ENCODE measurements at regions of chr5 and their contacts with region 1.

Region 1: GRCh38 chr5:108046955-108047670 is 334.8 kb downstream of the FBXL17 start:
- DNase-seq: no peak
- H3K4me3 ChIP-seq: no peak overlapping the region
- H3K27ac ChIP-seq: no peak overlapping the region
- H3K4me1 ChIP-seq: no peaks in the 10 kb centered on the region
- H3K27me3 ChIP-seq: no peaks in the 10 kb centered on the region
- CTCF ChIP-seq: no peak

Region 2: DNA sequence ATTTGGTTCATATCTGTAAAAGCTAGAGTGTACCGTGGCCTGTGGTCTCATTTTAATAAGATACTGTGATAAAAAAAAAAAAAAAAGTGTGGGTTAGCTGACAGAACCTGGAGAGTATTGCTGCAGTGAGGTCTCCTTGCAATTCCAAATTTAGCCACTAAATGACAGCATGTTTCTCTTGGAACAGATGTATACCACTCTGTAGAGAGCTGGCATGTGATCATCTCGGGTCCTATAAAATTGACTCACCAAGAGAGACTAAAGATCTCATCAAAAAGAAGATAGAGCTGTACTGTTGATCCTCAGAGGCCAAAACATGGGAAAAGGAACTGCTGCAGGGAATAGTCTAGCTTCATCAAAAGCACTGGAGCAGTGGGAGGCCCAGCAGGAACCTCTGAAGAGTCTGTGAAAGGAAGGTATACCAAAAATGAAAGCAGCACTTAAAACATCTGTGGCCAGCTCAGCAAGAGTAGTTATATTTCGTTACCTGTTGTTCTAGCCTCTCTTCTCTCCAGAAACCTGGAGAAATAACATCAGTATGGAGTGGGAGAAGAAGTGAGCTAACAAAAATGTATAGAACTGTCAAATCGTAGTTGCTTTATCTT is 1203.2 kb before region 1 on chr5:
- CTCF ChIA-PET with region 1: no interaction called
- dilution Hi-C with region 1: no loop called
- in situ Hi-C with region 1: no loop called
- intact Hi-C with region 1: no loop called
- DNase-seq: peak; percentile 26
- H3K4me3 ChIP-seq: no peak overlapping the region
- H3K27ac ChIP-seq: no peak overlapping the region
- H3K4me1 ChIP-seq: no peaks in the 10 kb centered on the region
- H3K27me3 ChIP-seq: no peaks in the 10 kb centered on the region
- CTCF ChIP-seq: peak; percentile 35 to 43

Region 3: DNA sequence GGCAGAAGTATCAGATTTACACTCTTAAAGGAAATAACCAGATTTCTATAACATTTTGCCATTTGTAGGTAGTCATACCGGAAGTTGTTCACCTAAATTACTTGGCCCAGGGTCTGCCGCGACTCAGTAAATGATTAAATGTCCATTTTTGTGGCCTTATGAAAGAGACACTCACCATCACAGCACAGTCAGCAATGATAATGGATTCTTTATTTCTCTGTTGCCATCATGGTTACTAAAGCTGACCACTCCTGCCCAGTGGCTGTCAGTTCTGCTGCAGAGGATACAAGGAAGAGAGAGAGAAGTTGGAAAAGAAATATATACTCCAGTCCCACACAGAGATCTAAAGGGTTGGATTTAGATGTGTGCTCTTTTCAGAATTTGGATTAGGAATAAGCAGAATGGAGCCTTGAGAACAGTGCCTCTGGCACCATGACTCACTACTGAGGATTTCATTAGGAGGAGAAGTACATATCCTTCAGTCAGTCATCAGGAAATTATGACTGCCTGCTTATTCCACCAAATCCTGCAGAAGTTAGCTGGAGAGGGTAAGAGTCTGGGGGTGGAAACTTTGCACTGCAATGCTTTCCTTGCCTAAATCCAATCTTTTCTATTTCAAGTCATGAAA is 303.6 kb before region 1 on chr5:
- CTCF ChIA-PET with region 1: interaction called, 17 read pairs
- dilution Hi-C with region 1: no loop called
- in situ Hi-C with region 1: no loop called
- intact Hi-C with region 1: no loop called
- DNase-seq: peak; percentile 71
- H3K4me3 ChIP-seq: no peak overlapping the region
- H3K27ac ChIP-seq: no peak overlapping the region
- H3K4me1 ChIP-seq: peaks cover 5% of the 10 kb centered on the region
- H3K27me3 ChIP-seq: no peaks in the 10 kb centered on the region
- CTCF ChIP-seq: no peak

Region 4: DNA sequence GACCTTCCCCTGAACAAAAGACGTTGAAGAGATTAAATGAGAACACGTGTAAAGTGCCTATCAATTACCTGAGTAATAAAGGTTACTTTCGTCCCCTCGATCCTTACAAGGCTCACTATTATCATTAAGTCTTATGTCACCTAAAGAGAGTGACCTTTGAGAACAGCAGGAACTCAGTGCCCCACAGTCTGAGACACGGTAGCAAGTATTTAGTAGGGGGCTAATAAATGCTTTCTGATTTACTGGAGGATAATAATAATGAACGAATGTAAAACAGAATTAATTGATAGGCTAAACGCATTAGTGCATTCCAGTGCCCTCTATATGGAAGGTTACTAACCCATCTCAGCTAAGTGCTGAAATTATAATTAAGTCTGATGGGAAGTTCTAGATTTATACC is 134.9 kb after region 1 on chr5:
- CTCF ChIA-PET with region 1: no interaction called
- dilution Hi-C with region 1: no loop called
- in situ Hi-C with region 1: no loop called
- intact Hi-C with region 1: no loop called
- DNase-seq: no peak
- H3K4me3 ChIP-seq: no peak overlapping the region
- H3K27ac ChIP-seq: no peak overlapping the region
- H3K4me1 ChIP-seq: no peaks in the 10 kb centered on the region
- H3K27me3 ChIP-seq: no peaks in the 10 kb centered on the region
- CTCF ChIP-seq: no peak

Region 5: GRCh38 chr5:108461628-108462367 is 414.7 kb after region 1 on chr5:
- CTCF ChIA-PET with region 1: no interaction called
- dilution Hi-C with region 1: no loop called
- in situ Hi-C with region 1: no loop called
- intact Hi-C with region 1: no loop called
- DNase-seq: peak; percentile 59
- H3K4me3 ChIP-seq: no peak overlapping the region
- H3K27ac ChIP-seq: no peak overlapping the region
- H3K4me1 ChIP-seq: no peaks in the 10 kb centered on the region
- H3K27me3 ChIP-seq: no peaks in the 10 kb centered on the region
- CTCF ChIP-seq: no peak